ENCODE measurements at regions of chr17 and their contacts with region 1.

Region 1: GRCh38 chr17:1365445-1366039 is 34.5 kb downstream of the YWHAE start:
- DNase-seq: peak in 3 of 6 donors; percentile 28 to 53 (median 51)
- ATAC-seq: peak; percentile 77 to 86 (median 84)
- H3K4me3 ChIP-seq: no peak overlapping the region
- H3K27ac ChIP-seq: no peak overlapping the region
- H3K4me1 ChIP-seq: peaks cover 4 to 20% (median 17%) of the 10 kb centered on the region in 3 donors
- H3K27me3 ChIP-seq: no peaks in the 10 kb centered on the region
- CTCF ChIP-seq: peak; percentile 58 to 79 (median 70)

Region 2: DNA sequence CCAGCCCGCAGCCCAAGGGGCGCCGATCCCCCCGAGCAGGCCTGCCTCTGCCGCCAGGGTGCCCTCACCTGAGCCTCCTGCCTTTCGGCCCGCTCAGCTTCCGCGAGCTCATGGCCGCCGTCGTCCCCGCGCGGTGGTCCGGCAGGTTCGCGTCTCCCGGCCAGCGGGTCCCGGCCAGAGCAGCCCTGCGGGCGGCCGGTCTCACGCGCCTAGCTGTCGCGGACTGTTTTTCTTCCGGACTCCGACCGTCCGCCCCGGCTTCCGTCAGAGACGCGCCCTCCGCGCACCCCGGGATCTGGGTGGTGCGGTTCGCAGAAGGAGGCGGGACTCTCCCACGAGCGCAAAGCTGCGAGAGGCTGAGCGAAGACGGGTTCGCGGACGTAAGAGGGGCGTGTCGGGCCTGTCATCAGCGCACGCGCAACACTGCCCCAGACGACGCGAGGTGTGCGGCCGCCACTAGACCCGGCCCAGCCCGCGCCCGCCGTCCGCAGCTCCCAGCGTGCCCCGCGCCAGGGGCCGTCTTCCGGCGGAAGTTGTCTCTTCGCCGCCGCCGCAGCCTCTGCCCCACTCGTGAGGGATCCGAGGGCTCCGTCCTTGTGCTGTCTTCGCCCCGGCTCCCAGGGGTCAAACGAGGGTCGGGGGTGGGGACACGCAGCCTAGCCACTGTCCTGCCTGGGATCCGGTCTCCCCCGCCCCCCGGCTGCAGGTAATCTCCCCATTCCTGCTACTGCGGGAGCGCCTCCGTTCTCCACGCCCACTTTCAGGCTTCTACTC is 151.0 kb after region 1 on chr17 and contains the start of gene INPP5K:
- intact Hi-C with region 1: loop called in 2 of 3 experiments (anchors 5 to 10 kb)
- DNase-seq: peak; percentile 97 to 100 (median 98)
- ATAC-seq: peak; percentile 94 to 98 (median 96)
- H3K4me3 ChIP-seq: peak within 1 kb of the TSS; percentile 66 to 100 (median 86)
- H3K27ac ChIP-seq: peak within 1 kb of the TSS; percentile 53 to 87 (median 84)
- H3K4me1 ChIP-seq: peaks cover 0 to 11% (median 10%) of the 10 kb centered on the region in 3 donors
- H3K27me3 ChIP-seq: no peaks in the 10 kb centered on the region
- CTCF ChIP-seq: no peak
- total RNA-seq, gene INPP5K: 13.2 to 23.8 (median 17.2) TPM

Region 3: DNA sequence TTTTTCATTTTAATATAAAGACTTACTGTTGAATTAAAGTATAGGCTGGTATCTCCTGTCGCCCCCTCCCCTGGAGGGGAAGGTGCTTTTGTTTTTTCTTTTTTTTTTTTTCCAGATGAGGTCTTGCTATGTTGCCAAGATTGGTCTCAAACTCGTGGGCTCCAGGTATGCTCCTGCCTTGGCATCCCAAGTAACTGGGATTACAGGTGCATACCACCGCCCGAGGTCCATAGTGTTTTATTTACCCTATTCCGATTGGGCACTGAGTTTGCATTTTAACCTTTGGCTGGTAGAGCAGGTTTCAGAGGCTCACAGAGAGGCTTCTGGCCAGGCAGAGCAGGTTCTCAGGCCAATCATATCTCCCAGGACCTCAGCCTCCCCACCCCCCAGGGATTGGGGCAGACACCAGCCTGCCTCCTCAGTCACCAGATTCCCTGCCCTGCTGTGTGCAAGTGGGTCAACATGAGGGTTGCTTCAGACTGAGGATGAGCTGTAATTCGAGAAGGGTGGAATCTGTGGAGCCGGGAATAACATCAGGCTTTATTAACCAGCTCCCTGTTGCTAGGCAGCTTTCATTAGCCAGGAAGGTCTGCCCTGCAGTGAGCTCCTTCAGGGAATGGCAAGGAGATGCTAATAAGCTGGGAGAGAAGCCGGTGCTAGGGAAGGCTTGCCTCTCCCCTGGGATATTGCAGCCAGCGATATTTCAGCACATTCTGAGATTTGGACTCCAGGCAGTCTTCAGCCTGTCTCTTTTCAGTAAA is 982.2 kb after region 1 on chr17:
- intact Hi-C with region 1: no loop called
- DNase-seq: peak in 1 of 6 donors; percentile 49
- ATAC-seq: peak; percentile 74 to 87 (median 86)
- H3K4me3 ChIP-seq: no peak overlapping the region
- H3K27ac ChIP-seq: peak overlapping the region in 2 of 4 donors; percentile 35 to 36
- H3K4me1 ChIP-seq: peaks cover 0 to 8% (median 0%) of the 10 kb centered on the region in 3 donors
- H3K27me3 ChIP-seq: no peaks in the 10 kb centered on the region
- CTCF ChIP-seq: no peak

Measured in pancreas (tissue), 10 donors.